ENCODE measurements at regions of chr15 and their contacts with region 1.

Region 1: DNA sequence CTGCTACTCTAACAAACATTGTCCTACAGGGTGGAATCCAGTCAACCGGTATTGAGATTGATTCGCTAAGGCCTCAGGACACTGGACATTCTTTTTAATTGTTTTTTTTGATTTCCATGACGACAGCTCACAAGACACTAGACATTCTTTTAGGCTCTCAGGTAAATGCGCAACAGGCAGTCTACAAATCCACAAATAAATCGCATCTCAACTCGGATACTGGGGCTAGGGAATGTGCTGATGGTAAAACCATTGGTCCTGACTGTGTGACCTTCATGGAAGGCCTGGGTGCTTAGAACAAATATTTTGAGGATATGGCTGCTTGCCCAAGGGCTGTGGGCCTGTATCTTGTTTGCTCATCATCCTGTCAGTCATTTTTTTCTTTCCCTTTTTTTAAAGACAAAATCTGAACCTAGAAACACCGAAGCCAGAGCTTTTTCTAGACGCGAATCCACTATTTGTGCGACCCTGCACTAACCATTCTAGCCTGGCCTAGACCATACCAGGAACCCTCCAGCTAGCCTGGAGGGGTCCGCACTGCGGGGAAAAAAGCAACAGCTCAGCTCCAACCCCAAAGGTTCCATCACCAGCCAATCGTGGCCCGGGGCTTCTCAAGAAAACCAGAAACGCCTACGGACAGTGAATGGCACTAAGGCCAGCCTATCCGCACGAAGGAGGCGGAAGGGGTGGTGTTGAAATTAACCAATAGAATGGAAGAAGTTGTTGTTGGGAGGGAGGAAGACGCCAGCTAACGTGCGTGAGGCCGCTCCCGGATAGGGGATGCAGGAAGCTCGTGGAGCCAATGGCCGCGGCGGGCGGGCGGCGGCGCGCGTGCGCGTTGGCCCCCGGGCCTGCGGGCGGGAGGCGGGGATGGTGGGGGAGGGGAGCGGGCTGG is 18.1 kb upstream of the CHD2 start:
- DNase-seq: peak; percentile 99
- ATAC-seq: peak; percentile 92
- H3K4me3 Mint-ChIP-seq: peak overlapping the region; percentile 83
- H3K27ac Mint-ChIP-seq: peak overlapping the region; percentile 98
- H3K4me1 Mint-ChIP-seq: peaks cover 46% of the 10 kb centered on the region
- H3K27me3 Mint-ChIP-seq: no peaks in the 10 kb centered on the region
- CTCF ChIP-seq: no peak

Region 2: GRCh38 chr15:92541291-92542200 is 340.5 kb before region 1 on chr15:
- CTCF ChIA-PET with region 1: no interaction called
- POLR2A ChIA-PET with region 1: no interaction called
- intact Hi-C with region 1: no loop called
- DNase-seq: no peak
- ATAC-seq: no peak
- H3K4me3 Mint-ChIP-seq: no peak overlapping the region
- H3K27ac Mint-ChIP-seq: no peak overlapping the region
- H3K4me1 Mint-ChIP-seq: no peaks in the 10 kb centered on the region
- H3K27me3 Mint-ChIP-seq: peaks cover 8% of the 10 kb centered on the region
- CTCF ChIP-seq: no peak

Region 3: DNA sequence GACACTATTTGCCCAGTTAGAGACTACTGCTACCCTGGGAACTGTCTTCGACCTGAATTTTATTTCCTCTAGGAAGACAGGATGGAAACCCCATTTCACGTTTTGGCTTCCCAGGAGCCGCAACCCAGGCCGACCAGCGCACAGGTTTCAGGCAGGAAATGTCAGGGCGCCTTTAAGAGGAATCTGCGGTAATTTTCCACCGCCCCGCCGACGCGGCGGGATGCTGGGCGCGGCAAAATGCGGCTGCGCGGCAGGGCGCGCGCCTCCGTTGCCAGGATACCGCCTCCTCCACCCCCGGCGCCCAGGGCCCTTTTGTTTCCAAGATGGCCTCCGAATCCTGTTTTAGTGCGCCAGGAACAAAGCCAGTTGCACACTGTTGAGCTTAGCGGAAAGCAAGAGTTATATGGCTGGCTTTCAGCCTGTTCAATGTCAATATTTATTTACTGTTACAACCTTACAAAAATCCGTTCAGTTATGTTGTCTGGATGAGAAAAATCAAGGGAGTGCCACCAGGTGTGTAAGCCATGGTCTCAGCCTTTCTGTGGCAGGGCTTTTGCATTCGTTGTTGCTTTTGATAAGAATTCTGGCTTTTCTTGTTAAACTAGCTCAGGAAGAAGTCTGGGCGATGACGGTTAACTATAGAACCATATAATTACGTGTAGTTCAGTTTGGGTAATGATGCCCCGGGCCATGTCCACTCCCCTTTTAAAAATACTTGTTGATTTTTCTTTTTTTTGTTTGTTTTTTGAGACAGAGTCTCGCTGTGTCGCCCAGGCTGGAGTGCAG is 61.6 kb before region 1 on chr15:
- CTCF ChIA-PET with region 1: interaction called, 5 read pairs
- POLR2A ChIA-PET with region 1: interaction called, 52 read pairs
- intact Hi-C with region 1: no loop called
- DNase-seq: peak; percentile 88
- ATAC-seq: peak; percentile 75
- H3K4me3 Mint-ChIP-seq: peak overlapping the region; percentile 82
- H3K27ac Mint-ChIP-seq: peak overlapping the region; percentile 94
- H3K4me1 Mint-ChIP-seq: peaks cover 63% of the 10 kb centered on the region
- H3K27me3 Mint-ChIP-seq: no peaks in the 10 kb centered on the region
- CTCF ChIP-seq: no peak

Region 4: GRCh38 chr15:92845126-92845508 is 36.9 kb before region 1 on chr15:
- CTCF ChIA-PET with region 1: interaction called, 6 read pairs
- POLR2A ChIA-PET with region 1: interaction called, 31 read pairs
- intact Hi-C with region 1: loop called (anchors 5 kb)
- DNase-seq: no peak
- ATAC-seq: peak; percentile 28
- H3K4me3 Mint-ChIP-seq: peak overlapping the region; percentile 47
- H3K27ac Mint-ChIP-seq: peak overlapping the region; percentile 91
- H3K4me1 Mint-ChIP-seq: peaks cover 73% of the 10 kb centered on the region
- H3K27me3 Mint-ChIP-seq: no peaks in the 10 kb centered on the region
- CTCF ChIP-seq: no peak

Region 5: DNA sequence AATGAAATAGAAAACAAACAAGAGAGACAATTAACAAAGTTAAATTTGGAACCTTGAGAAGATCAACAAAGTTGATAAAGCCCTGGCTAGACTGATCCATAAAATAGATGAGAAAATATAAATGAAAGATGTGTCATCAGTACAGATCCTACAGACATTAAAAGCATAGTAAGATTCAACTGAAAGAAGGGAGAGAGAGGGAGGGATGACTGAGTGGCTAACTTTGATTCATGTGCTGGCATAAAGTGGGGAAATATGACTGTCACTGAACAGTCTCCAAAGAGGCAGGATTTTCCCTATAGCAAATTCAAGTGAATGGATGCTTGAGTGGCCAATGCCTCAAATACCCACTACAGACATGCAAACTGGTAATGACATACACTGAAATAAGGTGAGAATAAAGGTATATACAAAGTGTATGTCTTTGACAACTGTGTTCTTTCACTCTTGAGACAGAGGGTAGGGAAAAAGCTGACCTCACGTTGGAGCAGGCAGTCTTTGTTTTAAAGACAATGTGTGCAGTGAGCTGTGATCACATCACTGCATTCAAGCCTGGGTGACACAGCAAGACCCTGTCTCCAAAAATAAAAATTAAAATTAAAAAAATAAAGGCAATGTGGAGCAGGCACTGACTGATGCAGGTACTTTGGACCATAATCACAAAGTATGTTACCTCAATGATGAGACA is 17.8 kb before region 1 on chr15:
- CTCF ChIA-PET with region 1: interaction called, 11 read pairs
- POLR2A ChIA-PET with region 1: interaction called, 10 read pairs
- intact Hi-C with region 1: no loop called
- DNase-seq: no peak
- ATAC-seq: no peak
- H3K4me3 Mint-ChIP-seq: no peak overlapping the region
- H3K27ac Mint-ChIP-seq: no peak overlapping the region
- H3K4me1 Mint-ChIP-seq: no peaks in the 10 kb centered on the region
- H3K27me3 Mint-ChIP-seq: no peaks in the 10 kb centered on the region
- CTCF ChIP-seq: no peak

Region 6: GRCh38 chr15:92896561-92896960 is 14.5 kb after region 1 on chr15:
- CTCF ChIA-PET with region 1: interaction called, 64 read pairs
- POLR2A ChIA-PET with region 1: interaction called, 642 read pairs
- intact Hi-C with region 1: no loop called
- DNase-seq: no peak
- ATAC-seq: no peak
- H3K4me3 Mint-ChIP-seq: peak overlapping the region; percentile 13
- H3K27ac Mint-ChIP-seq: peak overlapping the region; percentile 86
- H3K4me1 Mint-ChIP-seq: peaks cover 65% of the 10 kb centered on the region
- H3K27me3 Mint-ChIP-seq: no peaks in the 10 kb centered on the region
- CTCF ChIP-seq: no peak

Region 7: DNA sequence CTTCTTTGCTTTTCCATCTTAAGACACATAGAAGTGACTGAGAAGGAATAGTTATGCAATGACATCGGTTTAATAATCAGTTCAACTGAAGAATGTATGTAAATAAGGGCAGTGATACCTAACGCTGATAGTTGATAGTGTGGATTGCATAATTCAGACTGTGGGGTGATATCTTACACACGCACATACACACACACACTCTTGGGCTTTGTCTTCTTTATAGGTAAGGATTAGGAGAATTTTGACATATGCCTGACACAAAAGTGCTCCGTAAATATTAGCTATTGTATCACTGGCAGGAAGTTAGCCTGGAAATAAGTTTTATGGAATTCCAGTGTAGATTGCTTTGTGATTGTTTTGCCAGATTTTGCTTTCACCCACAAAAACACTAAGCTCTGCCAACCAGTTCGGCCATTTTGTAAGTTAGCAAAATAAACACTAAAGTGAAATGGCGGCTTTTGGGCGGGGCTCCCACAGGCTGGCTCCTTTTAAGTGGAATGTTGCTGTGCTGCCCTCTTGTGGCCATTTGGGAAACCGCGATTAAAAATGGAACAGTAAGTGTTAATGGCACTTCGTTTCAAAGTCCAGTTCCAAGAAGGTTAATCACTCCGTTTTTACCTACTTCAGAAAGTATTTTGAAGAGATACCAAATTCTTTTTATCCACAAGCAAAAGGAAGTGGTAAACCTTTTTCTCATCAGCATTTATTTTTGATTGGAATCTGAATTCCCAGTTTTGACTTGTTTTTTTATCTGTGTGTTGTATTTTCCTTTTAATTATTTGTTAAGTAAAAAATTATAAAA is 35.8 kb after region 1 on chr15:
- CTCF ChIA-PET with region 1: interaction called, 9 read pairs
- POLR2A ChIA-PET with region 1: interaction called, 57 read pairs
- intact Hi-C with region 1: loop called (anchors 5 kb)
- DNase-seq: peak; percentile 99
- ATAC-seq: peak; percentile 34
- H3K4me3 Mint-ChIP-seq: no peak overlapping the region
- H3K27ac Mint-ChIP-seq: peak overlapping the region; percentile 87
- H3K4me1 Mint-ChIP-seq: peaks cover 78% of the 10 kb centered on the region
- H3K27me3 Mint-ChIP-seq: no peaks in the 10 kb centered on the region
- CTCF ChIP-seq: peak; percentile 91

Region 8: DNA sequence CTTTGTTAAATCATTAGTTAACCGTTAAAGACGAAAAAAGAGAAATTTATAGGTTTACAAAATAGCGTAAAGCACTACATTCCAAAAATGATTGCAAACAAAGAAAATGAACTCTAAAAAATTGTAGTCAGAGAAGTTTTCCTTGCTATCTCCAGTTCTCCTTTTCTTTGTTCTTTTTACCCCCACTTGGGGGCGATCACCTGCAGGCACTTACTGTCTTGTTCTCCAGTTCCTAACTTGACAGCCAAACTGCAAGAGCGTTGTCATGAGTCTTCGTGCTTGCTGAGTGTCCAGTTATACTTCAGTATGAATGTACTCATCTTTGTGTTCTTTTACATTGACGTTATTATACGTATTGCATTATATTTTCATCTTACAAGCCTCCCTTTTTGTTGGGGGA is 72.5 kb after region 1 on chr15:
- CTCF ChIA-PET with region 1: no interaction called
- POLR2A ChIA-PET with region 1: no interaction called
- intact Hi-C with region 1: no loop called
- DNase-seq: peak; percentile 17
- ATAC-seq: no peak
- H3K4me3 Mint-ChIP-seq: no peak overlapping the region
- H3K27ac Mint-ChIP-seq: no peak overlapping the region
- H3K4me1 Mint-ChIP-seq: peaks cover 30% of the 10 kb centered on the region
- H3K27me3 Mint-ChIP-seq: no peaks in the 10 kb centered on the region
- CTCF ChIP-seq: peak; percentile 54

Measured in activated CD8-positive, alpha-beta T cell treated with anti-CD3 and anti-CD28 coated beads for 36 hours (primary cell).